Heart left ventricle (tissue), 16 donors: ENCODE measurements at regions of chr3 and their contacts with region 1.

Region 1: DNA sequence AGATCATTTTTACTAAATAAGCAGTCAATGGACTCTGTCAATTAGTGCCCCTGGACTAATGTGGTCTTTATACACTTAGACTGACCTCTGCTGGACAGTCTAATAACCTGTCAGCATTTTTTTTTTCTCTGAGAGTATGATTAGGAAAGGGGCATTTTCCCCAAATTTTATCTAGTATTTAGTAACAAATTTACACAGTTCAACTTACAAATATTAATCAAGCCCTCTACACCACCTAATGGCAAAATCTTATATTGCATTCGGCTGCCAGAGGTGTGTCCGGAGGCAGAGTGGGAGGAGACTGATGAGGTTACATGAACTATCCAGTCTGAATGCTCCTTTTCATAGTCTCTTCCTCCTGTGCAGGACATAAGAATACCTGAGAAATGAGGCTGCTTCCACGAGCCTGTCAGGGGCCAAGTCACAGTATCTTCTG is 36.0 kb upstream of the COLQ start:
- DNase-seq: peak in 2 of 5 donors; percentile 35 to 39
- ATAC-seq: peak; percentile 33 to 79 (median 71)
- H3K4me3 ChIP-seq: no peak overlapping the region
- H3K27ac ChIP-seq: peak overlapping the region in 1 of 12 donors; percentile 67
- H3K4me1 ChIP-seq: peaks cover 0 to 21% (median 0%) of the 10 kb centered on the region in 12 donors
- H3K27me3 ChIP-seq: no peaks in the 10 kb centered on the region
- CTCF ChIP-seq: peak; percentile 41 to 77 (median 60)
- POLR2A ChIP-seq: no peak

Region 2: DNA sequence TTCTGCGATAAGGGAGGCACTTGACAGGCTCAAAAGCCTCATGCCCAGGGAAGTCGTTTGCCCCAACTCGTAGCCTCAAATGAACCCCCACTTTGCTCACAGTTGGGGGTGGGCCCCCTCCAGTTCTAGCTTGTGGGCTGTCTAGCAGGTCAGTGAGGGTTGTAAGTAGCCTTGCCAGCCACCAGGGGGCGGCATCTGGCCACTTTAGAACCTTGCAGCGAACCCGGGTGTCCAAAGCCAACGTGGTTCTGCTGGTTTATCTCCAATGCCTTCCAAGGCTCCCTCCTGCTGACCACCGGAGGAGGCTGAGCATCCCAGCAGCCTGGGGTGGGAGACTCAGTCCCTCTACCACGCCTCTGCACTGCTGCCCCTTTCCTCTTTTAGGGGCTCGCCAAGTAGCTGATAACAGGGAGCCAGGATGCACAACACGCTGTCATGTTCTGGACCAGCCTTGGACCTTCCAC is 449.4 kb before region 1 on chr3:
- intact Hi-C with region 1: loop called in 1 of 10 experiments (anchors 5 kb)
- DNase-seq: peak; percentile 60 to 87 (median 68)
- ATAC-seq: peak; percentile 63 to 82 (median 78)
- H3K4me3 ChIP-seq: no peak overlapping the region
- H3K27ac ChIP-seq: no peak overlapping the region
- H3K4me1 ChIP-seq: peaks cover 0 to 11% (median 4%) of the 10 kb centered on the region in 12 donors
- H3K27me3 ChIP-seq: no peaks in the 10 kb centered on the region
- CTCF ChIP-seq: peak; percentile 78 to 93 (median 88)
- POLR2A ChIP-seq: no peak

Region 3: GRCh38 chr3:15427182-15427880 is 130.2 kb before region 1 on chr3 and contains the starts of genes EAF1 and METTL6:
- intact Hi-C with region 1: loop called (anchors 5 to 10 kb)
- DNase-seq: peak; percentile 84 to 90 (median 88)
- ATAC-seq: peak; percentile 84 to 96 (median 92)
- H3K4me3 ChIP-seq: peak within 1 kb of the TSS; percentile 78 to 98 (median 92)
- H3K27ac ChIP-seq: peak within 1 kb of the TSS in 11 of 12 donors; percentile 62 to 92 (median 81)
- H3K4me1 ChIP-seq: peaks cover 0 to 54% (median 40%) of the 10 kb centered on the region in 12 donors
- H3K27me3 ChIP-seq: no peaks in the 10 kb centered on the region
- CTCF ChIP-seq: peak in 3 of 12 donors; percentile 24 to 30 (median 24)
- POLR2A ChIP-seq: peak in 1 of 2 donors; percentile 61
- total RNA-seq, gene EAF1: 7.0 to 19.6 (median 9.8) TPM
- total RNA-seq, gene METTL6: 5.7 to 14.7 (median 10.5) TPM

Region 4: GRCh38 chr3:15434756-15435155 is 122.8 kb before region 1 on chr3:
- intact Hi-C with region 1: loop called (anchors 5 to 10 kb)
- DNase-seq: no peak
- ATAC-seq: no peak
- H3K4me3 ChIP-seq: no peak overlapping the region
- H3K27ac ChIP-seq: no peak overlapping the region
- H3K4me1 ChIP-seq: peaks cover 0 to 35% (median 9%) of the 10 kb centered on the region in 12 donors
- H3K27me3 ChIP-seq: no peaks in the 10 kb centered on the region
- CTCF ChIP-seq: no peak
- POLR2A ChIP-seq: no peak

Region 5: GRCh38 chr3:15636003-15636709 is 78.6 kb after region 1 on chr3:
- intact Hi-C with region 1: no loop called
- DNase-seq: peak in 3 of 5 donors; percentile 28 to 62 (median 38)
- ATAC-seq: peak; percentile 30 to 81 (median 76)
- H3K4me3 ChIP-seq: peak overlapping the region in 3 of 12 donors; percentile 4 to 15 (median 8)
- H3K27ac ChIP-seq: peak overlapping the region in 11 of 12 donors; percentile 3 to 85 (median 60)
- H3K4me1 ChIP-seq: peaks cover 0 to 49% (median 22%) of the 10 kb centered on the region in 12 donors
- H3K27me3 ChIP-seq: no peaks in the 10 kb centered on the region
- CTCF ChIP-seq: no peak
- POLR2A ChIP-seq: no peak

Region 6: DNA sequence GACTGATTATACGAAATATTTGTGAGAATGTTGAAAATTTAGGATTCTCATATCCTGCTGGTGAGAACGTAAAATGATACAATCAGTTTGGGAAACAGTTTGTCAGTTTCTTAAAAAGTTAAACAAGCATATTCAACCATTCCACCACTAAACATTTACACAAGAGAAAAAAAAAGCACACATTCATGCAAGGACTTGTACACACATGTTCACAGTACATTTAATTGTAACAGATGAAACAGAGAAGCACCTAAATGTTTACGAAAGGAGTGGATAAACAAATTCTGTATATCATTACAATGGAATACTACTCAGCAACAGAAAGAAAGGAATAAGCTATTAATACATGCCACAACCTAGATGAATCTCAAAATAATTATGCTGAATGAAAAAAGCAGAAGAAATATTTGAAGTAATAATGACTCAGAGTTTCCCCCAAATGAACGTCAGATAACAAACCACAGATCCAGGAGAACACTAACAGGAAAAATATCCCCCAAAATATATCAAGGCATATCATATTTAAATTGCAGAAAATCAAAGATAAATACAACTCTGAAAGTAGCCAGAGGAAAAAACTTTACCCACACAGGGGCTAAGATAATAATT is 225.9 kb after region 1 on chr3:
- intact Hi-C with region 1: no loop called
- DNase-seq: no peak
- ATAC-seq: no peak
- H3K4me3 ChIP-seq: peak overlapping the region in 1 of 12 donors; percentile 23
- H3K27ac ChIP-seq: no peak overlapping the region
- H3K4me1 ChIP-seq: peaks cover 0 to 16% (median 8%) of the 10 kb centered on the region in 12 donors
- H3K27me3 ChIP-seq: no peaks in the 10 kb centered on the region
- CTCF ChIP-seq: no peak
- POLR2A ChIP-seq: no peak

Region 7: GRCh38 chr3:16122155-16122554 is 564.6 kb after region 1 on chr3:
- intact Hi-C with region 1: no loop called
- DNase-seq: no peak
- ATAC-seq: no peak
- H3K4me3 ChIP-seq: no peak overlapping the region
- H3K27ac ChIP-seq: peak overlapping the region in 2 of 12 donors; percentile 14 to 54
- H3K4me1 ChIP-seq: peaks cover 0 to 18% (median 0%) of the 10 kb centered on the region in 12 donors
- H3K27me3 ChIP-seq: no peaks in the 10 kb centered on the region
- CTCF ChIP-seq: no peak
- POLR2A ChIP-seq: no peak